ENCODE measurements at regions of chr20 and their contacts with region 1.

Region 1: GRCh38 chr20:815914-816606 is 17.5 kb upstream of the FAM110A start:
- DNase-seq: peak; percentile 43
- ATAC-seq: peak; percentile 88
- H3K4me3 ChIP-seq: no peak overlapping the region
- H3K27ac ChIP-seq: no peak overlapping the region
- H3K4me1 ChIP-seq: no peaks in the 10 kb centered on the region
- H3K27me3 ChIP-seq: no peaks in the 10 kb centered on the region; the same call in 1 of the 2 replicates
- CTCF ChIP-seq: peak; percentile 96
- POLR2A ChIP-seq: no peak
- RAD21 ChIP-seq: peak; percentile 92

Region 2: DNA sequence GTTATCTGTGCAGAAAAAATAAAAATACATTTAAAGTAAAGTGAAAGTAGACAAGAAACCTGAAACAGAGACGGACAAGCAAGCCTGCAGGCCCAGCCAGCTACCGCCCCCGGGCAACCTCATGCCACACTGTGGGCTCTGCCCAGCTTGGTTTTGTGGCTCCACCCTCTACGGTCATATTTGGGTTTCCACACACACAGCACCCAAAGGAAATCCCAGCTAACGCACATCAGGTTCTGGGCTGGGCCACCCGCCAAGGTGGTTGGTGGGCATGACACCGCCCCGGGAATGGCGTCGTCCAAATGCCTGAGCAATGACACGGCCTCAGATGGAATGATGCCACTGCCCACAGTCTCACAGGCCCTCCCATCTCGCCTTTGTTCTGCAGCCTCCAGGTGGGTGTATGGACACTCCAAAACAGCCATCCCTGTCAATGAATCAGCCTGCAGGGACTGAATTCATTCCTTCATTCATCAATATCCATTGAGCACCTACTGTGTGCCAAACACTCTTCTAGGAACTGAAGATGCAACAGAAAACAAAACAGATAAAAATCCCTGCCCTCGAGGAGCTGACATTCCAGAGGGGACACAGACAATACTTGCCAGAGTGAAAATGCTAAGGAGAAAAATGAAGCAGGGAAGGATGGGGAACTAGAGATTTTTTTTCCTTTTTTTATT is 40.4 kb after region 1 on chr20:
- CTCF ChIA-PET with region 1: no interaction called
- POLR2A ChIA-PET with region 1: no interaction called
- dilution Hi-C with region 1: no loop called
- in situ Hi-C with region 1: no loop called
- intact Hi-C with region 1: no loop called
- DNase-seq: peak; percentile 54
- ATAC-seq: peak; percentile 60
- H3K4me3 ChIP-seq: no peak overlapping the region
- H3K27ac ChIP-seq: no peak overlapping the region
- H3K4me1 ChIP-seq: peaks cover 3% of the 10 kb centered on the region
- H3K27me3 ChIP-seq: no peaks in the 10 kb centered on the region
- CTCF ChIP-seq: no peak
- POLR2A ChIP-seq: no peak
- RAD21 ChIP-seq: no peak

Region 3: GRCh38 chr20:884983-885952 is 69.2 kb after region 1 on chr20:
- CTCF ChIA-PET with region 1: interaction called, 3 read pairs
- POLR2A ChIA-PET with region 1: no interaction called
- dilution Hi-C with region 1: no loop called
- in situ Hi-C with region 1: no loop called
- intact Hi-C with region 1: loop called (anchors 2 kb)
- DNase-seq: peak; percentile 26
- ATAC-seq: peak; percentile 95
- H3K4me3 ChIP-seq: no peak overlapping the region
- H3K27ac ChIP-seq: no peak overlapping the region
- H3K4me1 ChIP-seq: no peaks in the 10 kb centered on the region
- H3K27me3 ChIP-seq: no peaks in the 10 kb centered on the region; the same call in none of the 2 replicates
- CTCF ChIP-seq: no peak
- POLR2A ChIP-seq: no peak
- RAD21 ChIP-seq: no peak

Region 4: DNA sequence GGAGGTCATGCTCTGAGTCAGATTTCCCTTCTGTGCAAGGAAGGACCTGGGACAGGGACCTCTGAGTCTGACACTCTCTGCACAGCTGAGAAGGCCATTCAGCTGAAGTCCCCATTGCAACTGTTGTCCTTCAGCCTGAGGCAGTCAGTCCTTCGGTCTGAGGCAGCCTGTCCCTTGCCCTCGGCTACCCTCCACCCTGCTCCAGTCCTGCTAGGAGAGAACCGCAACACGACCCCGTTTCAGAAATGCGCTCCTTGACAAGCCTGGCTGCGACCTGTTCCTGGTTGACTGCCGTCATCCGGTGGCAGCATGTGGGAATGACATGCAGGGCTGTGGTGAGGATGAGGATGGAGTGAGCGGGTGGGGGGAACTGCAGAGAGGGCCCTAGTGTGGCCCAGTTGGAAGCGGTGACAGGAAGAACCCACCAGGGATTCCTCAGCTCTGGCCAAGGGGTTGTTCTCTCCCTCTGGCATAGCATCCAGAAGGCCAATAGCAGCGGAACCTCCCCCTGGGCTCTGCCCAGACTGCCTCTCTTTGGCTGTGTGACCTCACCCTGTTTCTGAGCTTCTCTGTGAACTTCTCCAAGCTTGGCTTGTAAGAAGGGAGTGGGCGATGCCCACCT is 140.4 kb after region 1 on chr20:
- CTCF ChIA-PET with region 1: interaction called, 63 read pairs
- POLR2A ChIA-PET with region 1: no interaction called
- dilution Hi-C with region 1: no loop called
- in situ Hi-C with region 1: loop called (anchors 5 kb)
- intact Hi-C with region 1: loop called (anchors 1 kb)
- DNase-seq: peak; percentile 51
- ATAC-seq: peak; percentile 94
- H3K4me3 ChIP-seq: no peak overlapping the region
- H3K27ac ChIP-seq: no peak overlapping the region
- H3K4me1 ChIP-seq: no peaks in the 10 kb centered on the region
- H3K27me3 ChIP-seq: peaks cover 8% of the 10 kb centered on the region
- CTCF ChIP-seq: peak; percentile 97
- POLR2A ChIP-seq: peak; percentile 57
- RAD21 ChIP-seq: peak; percentile 99

Region 5: DNA sequence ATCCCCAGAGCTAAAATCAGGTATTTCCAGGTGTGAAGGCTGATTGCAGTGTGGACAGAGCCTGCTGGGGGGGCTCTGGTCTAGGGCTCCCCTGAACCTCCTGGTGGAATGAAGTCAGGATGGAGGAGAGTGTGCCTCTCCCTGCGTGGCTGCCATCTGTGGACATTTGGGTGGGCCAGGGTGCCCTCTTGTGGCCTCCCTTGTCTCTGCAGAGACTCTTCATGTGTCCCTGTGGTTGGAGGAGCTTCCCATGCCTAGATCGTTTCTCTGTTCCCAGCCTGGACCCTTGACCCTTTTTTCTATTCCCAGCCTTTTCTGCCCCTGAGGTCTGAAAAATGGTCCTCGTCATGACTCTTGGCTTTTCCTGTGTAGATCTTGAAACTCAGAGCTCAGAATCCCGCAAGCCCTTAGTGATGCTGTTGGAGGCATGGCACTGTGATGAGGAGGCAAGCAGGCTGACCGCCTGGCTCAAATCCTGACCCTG is 292.4 kb after region 1 on chr20:
- CTCF ChIA-PET with region 1: no interaction called
- POLR2A ChIA-PET with region 1: no interaction called
- dilution Hi-C with region 1: no loop called
- in situ Hi-C with region 1: loop called (anchors 10 kb)
- intact Hi-C with region 1: loop called (anchors 1 kb)
- DNase-seq: peak; percentile 23
- ATAC-seq: peak; percentile 96
- H3K4me3 ChIP-seq: no peak overlapping the region
- H3K27ac ChIP-seq: no peak overlapping the region
- H3K4me1 ChIP-seq: no peaks in the 10 kb centered on the region
- H3K27me3 ChIP-seq: peaks cover 12% of the 10 kb centered on the region
- CTCF ChIP-seq: peak; percentile 64
- POLR2A ChIP-seq: no peak
- RAD21 ChIP-seq: peak; percentile 55

Region 6: DNA sequence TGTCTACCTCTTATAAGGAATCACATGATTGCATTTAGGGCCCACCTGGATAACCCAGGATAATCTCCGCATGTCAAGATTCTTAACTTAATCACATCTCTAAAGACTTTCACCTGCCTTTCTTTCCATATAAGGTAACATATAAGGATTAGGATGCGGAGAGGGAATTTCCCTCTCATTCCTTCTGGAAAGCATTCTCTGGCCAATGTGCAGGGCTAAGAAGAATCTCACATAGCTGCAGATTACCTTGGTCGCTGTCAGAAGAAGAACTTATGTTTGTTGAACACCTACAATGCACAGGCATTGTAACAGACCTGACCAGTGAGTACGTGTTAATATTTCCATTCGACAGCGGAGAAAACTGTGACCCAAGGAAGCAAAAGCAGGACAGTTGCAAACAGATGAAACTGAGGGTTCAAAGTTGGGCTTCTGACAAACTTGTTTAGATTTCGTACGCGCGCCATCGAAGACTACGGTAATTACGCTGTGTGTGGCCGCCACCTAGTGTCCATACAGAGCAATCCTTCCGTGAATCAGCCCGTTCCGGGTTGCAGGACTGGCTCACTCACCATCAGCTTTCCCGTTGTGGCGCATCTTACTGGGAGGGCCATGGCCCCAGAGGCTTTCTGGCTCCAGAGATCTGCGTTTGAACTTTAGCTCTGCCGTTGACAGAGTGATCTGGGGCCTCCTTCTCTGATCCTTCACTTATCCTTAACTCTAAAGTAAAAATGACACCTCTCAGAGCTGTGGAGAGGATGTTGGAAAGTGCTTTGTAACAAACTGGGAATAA is 396.7 kb after region 1 on chr20:
- CTCF ChIA-PET with region 1: no interaction called
- POLR2A ChIA-PET with region 1: no interaction called
- dilution Hi-C with region 1: no loop called
- in situ Hi-C with region 1: loop called (anchors 10 kb)
- intact Hi-C with region 1: loop called (anchors 1 kb)
- DNase-seq: peak; percentile 72
- ATAC-seq: peak; percentile 99
- H3K4me3 ChIP-seq: no peak overlapping the region
- H3K27ac ChIP-seq: no peak overlapping the region
- H3K4me1 ChIP-seq: no peaks in the 10 kb centered on the region
- H3K27me3 ChIP-seq: peaks cover 29% of the 10 kb centered on the region
- CTCF ChIP-seq: peak; percentile 77
- POLR2A ChIP-seq: no peak
- RAD21 ChIP-seq: peak; percentile 71

Region 7: GRCh38 chr20:1466211-1467081 is 650.4 kb after region 1 on chr20 and contains the start of gene NSFL1C:
- CTCF ChIA-PET with region 1: no interaction called
- POLR2A ChIA-PET with region 1: no interaction called
- dilution Hi-C with region 1: no loop called
- in situ Hi-C with region 1: no loop called
- intact Hi-C with region 1: loop called (anchors 10 kb)
- DNase-seq: peak; percentile 93
- ATAC-seq: peak; percentile 89
- H3K4me3 ChIP-seq: peak within 1 kb of the TSS; percentile 96
- H3K27ac ChIP-seq: peak within 1 kb of the TSS; percentile 74
- H3K4me1 ChIP-seq: peaks cover 12% of the 10 kb centered on the region
- H3K27me3 ChIP-seq: peaks cover 2% of the 10 kb centered on the region; the same call in 1 of the 2 replicates
- CTCF ChIP-seq: peak; percentile 97
- POLR2A ChIP-seq: peak; percentile 85
- RAD21 ChIP-seq: peak; percentile 45
- total RNA-seq, gene NSFL1C: 40.3 and 41.1 TPM in 2 replicates